Activated CD4-positive, alpha-beta memory T cell treated with anti-CD3 and anti-CD28 coated beads for 36 hours (primary cell): ENCODE measurements at regions of chr17 and their contacts with region 1.

Region 1: GRCh38 chr17:40355123-40355803 is 9.3 kb downstream of the GJD3 start:
- DNase-seq: peak; percentile 83
- H3K4me3 Mint-ChIP-seq: no peak overlapping the region
- H3K27ac Mint-ChIP-seq: no peak overlapping the region
- H3K4me1 Mint-ChIP-seq: peaks cover 17% of the 10 kb centered on the region
- H3K27me3 Mint-ChIP-seq: no peaks in the 10 kb centered on the region

Region 2: GRCh38 chr17:40203131-40203530 is 152.1 kb before region 1 on chr17:
- CTCF ChIA-PET with region 1: interaction called, 25 read pairs
- POLR2A ChIA-PET with region 1: no interaction called
- intact Hi-C with region 1: loop called (anchors 2 kb)
- DNase-seq: no peak
- H3K4me3 Mint-ChIP-seq: no peak overlapping the region
- H3K27ac Mint-ChIP-seq: no peak overlapping the region
- H3K4me1 Mint-ChIP-seq: no peaks in the 10 kb centered on the region
- H3K27me3 Mint-ChIP-seq: peaks cover 2% of the 10 kb centered on the region

Region 3: DNA sequence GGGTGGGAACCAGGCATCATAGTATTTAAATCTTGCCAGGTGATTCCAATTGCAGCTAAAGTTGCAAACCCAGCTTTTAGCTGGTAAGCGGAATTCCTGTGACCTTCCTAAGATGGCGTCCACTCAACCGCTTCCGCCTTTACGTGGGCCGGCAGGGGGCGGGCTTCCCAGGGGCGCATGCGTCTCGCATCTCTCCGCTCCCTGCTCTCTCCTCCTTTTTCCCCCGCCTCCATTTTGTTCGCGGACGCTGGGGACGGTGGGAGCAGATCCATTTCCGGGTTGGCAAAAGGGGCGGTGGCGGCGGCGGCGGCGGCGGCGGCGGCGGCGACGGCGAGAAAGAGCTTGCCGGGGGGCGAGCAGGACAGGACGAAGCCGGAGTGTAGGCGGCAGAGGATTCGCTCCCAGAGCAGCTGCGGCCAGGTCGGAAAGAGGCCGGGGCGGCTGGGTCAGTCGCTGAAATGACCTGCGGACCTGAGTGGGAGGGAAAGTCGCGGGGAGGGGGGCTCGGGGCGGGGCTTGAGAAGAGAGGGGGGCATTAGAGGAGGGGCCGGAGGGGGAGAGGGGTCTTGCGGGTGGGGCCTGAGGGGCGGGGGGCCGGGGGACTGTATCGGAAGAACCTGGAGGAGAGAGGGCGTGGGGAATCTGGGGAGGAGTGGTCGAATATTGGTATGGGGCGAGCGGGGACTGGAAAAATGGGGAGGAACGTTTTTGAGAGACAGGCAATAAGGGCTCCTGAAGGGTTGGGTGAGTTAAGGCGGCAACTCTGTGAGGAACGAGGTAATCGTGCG is 136.0 kb before region 1 on chr17 and contains the start of gene WIPF2:
- CTCF ChIA-PET with region 1: interaction called, 11 read pairs
- POLR2A ChIA-PET with region 1: no interaction called
- intact Hi-C with region 1: no loop called
- DNase-seq: peak; percentile 99
- H3K4me3 Mint-ChIP-seq: peak within 1 kb of the TSS; percentile 86
- H3K27ac Mint-ChIP-seq: peak within 1 kb of the TSS; percentile 92
- H3K4me1 Mint-ChIP-seq: peaks cover 27% of the 10 kb centered on the region
- H3K27me3 Mint-ChIP-seq: no peaks in the 10 kb centered on the region
- total RNA-seq, gene WIPF2: 19.0 to 20.6 TPM

Region 4: DNA sequence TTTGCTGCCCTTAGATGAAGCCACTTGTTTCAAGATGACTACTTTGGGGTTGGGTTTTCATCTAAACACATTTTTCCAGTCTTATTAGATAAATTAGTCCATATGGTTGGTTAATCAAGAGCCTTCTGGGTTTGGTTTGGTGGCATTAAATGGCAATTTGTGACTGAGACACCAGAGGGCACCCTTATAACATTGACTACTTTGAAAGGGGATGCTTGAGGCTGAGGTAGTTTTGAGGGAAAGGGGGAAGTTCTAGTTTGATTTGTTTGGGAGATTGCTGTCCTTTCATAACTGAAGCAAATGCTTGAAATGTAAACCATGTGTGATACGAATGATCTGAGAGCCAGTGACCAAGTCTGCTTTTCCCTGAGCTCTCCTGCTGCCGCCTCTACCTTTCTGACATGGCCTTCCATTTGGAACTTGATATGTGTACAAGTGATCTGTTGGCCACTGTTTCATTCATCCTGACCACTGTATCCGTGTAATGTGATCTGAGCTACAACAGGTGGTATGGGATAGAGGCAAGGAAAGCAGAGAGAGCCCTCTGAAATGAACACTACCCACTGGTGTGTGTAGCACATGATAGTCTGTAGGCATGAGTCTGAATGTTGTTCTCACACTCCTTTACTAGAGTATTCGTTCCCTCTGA is 52.1 kb before region 1 on chr17:
- CTCF ChIA-PET with region 1: interaction called, 241 read pairs
- POLR2A ChIA-PET with region 1: interaction called, 4 read pairs
- intact Hi-C with region 1: loop called (anchors 1 kb)
- DNase-seq: peak; percentile 46
- H3K4me3 Mint-ChIP-seq: no peak overlapping the region
- H3K27ac Mint-ChIP-seq: peak overlapping the region; percentile 36
- H3K4me1 Mint-ChIP-seq: peaks cover 15% of the 10 kb centered on the region
- H3K27me3 Mint-ChIP-seq: no peaks in the 10 kb centered on the region

Region 5: DNA sequence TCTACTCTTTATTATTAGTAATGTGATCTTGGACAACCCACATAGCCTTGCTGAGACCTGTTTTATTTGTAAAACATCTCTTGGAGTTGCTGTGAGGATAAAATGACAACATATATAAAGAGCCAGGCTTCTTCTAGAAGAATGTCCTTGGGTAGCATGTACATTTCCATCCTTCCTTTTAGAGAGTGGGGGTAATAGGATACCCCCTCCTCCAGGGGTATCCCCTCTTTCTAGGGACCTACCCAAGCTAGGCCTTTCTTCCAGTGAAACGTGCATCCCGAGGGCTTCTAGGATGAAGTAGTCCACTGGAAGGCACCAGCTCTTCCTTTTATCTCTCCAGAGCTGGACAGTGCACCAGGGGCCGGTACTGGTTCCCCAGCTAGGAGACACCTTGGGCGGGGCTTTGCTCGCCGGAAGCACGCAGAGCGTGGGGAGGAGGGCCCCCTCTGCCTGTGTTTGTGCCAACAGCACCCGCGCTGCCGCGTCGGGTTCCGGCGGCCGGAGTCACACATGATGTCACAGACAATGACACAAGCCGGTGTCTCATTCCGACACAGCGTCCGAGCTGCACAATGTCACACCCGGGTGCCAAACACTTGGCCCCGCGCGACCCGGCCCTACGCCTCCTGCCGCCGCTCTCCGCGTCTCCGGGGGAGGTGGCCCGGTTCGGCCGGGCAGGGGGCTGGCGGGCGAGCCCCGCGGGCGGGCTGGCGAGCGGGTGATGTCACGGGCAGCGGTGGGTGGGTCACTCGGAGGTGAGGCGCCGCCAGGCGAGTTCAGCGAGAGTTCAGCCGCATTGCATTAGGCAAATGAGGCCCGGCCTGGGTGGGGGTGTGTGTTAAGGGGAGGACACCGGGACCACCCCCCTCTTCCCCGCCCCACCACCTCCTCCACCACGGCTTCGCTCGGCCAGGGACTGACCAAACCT is 14.1 kb before region 1 on chr17:
- CTCF ChIA-PET with region 1: interaction called, 36 read pairs
- POLR2A ChIA-PET with region 1: interaction called, 3 read pairs
- intact Hi-C with region 1: no loop called
- DNase-seq: peak; percentile 94
- H3K4me3 Mint-ChIP-seq: peak overlapping the region; percentile 66
- H3K27ac Mint-ChIP-seq: peak overlapping the region; percentile 81
- H3K4me1 Mint-ChIP-seq: peaks cover 75% of the 10 kb centered on the region
- H3K27me3 Mint-ChIP-seq: no peaks in the 10 kb centered on the region